Pancreas (tissue), 10 donors: ENCODE measurements at regions of chr3 and their contacts with region 1.

Region 1: DNA sequence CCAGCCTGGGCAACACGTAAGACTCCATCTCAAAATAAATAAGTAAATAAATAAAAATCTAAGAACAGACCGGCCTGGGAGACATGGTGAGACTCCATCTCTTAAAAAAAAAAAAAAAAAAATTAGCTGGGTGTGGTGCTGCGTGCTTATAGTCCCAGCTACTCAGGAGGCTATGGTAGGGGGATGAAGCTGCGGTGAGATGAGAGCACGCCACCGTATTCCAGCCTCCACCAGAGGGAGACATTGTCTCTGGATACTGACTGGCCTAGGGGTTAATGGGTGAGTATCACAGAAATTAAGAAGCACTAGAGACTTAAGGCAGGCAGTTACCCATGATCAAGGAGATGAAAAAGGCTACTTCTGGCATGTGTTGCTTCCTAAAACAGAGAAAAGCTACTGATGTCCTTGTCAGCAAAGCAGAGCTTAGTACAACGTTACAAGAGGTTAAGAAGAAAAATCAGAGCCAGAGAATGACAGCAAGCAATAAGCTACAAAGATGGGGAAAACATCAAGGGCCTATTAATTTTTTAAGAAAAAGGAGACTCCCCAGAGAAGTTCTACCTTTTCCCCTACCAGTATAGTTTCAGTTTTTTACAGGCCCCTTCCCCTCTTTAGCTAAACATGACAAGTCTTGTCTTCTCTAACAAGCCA is 8.6 kb downstream of the TFRC start:
- DNase-seq: peak in 4 of 6 donors; percentile 40 to 69 (median 50)
- ATAC-seq: peak; percentile 93 to 99 (median 96)
- H3K4me3 ChIP-seq: no peak overlapping the region
- H3K27ac ChIP-seq: no peak overlapping the region
- H3K4me1 ChIP-seq: no peaks in the 10 kb centered on the region
- H3K27me3 ChIP-seq: no peaks in the 10 kb centered on the region
- CTCF ChIP-seq: peak; percentile 29 to 71 (median 52)

Region 2: DNA sequence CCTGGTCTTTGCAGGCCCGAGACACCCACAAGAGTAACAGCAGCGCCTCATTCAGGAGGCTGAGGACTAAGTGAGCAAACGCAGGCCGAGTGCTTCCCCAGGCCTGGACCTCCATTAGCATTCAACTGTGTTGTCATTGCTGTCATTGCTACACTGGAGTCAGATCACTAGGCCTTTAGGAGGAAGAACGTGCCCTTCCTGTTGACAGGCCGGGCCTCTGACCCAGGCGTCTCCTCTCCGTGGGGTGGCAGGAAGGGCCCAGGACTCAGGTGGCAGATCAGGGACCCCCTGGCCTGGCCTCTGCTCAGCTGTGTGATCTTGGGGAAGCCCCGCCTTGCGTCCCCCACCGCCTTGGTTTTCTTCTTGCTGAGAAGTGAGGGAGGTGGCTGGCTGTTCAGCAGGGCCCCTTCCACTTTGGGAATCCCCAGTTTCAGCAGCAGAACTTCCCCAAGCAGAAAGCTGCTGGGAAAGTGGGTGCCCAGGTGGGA is 118.8 kb after region 1 on chr3:
- intact Hi-C with region 1: loop called (anchors 2 to 10 kb)
- DNase-seq: no peak
- ATAC-seq: peak in 2 of 4 donors; percentile 4 to 9
- H3K4me3 ChIP-seq: no peak overlapping the region
- H3K27ac ChIP-seq: peak overlapping the region in 3 of 4 donors; percentile 52 to 82 (median 74)
- H3K4me1 ChIP-seq: peaks cover 0 to 20% (median 12%) of the 10 kb centered on the region in 3 donors
- H3K27me3 ChIP-seq: no peaks in the 10 kb centered on the region
- CTCF ChIP-seq: no peak

Region 3: DNA sequence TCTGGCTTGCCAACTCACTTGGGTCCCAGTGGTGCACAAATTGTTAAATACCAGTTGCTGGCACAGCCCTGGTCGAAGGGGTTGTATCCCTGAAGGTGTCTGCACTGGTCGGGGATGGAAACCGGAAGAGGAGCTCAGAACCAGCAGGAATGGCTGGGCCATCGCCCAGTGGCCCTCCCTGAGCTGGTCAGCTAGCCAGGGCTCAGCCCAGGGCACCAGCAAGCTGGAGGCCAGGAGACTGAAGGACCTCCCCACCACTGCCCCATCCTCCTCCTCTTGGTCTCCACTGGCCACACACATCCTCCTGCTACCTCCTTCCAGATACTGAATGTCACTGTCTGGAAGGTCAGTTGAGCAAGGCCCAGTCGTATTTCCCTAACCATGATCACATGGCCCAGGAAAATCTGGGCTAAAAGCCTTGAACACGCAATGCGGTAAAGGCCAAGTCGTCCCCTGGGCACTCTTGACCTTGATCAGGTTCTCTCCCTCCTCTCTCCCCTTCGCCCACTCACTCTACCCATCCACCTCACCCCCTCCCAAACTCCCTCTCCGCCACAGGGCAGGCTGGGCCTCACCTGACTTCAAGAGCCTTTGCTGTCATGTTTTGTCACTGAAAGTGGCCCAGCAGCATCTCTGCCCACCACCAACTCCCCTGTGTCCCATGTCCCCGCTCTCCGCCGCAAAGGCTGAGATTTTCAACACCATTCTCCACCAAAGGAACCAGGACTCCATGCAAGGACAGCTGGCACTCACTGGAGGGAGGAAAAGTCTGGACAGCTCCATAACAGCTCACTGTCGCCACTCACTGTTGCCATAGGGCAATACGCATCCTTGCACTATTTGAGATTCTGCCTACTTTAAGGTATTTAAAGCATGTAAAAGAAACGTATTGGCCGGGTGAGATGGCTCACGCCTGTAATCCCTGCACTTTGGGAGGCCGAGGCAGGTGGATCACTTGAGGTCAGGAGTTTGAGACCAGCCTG is 125.7 kb after region 1 on chr3:
- intact Hi-C with region 1: loop called (anchors 2 to 10 kb)
- DNase-seq: no peak
- ATAC-seq: no peak
- H3K4me3 ChIP-seq: no peak overlapping the region
- H3K27ac ChIP-seq: no peak overlapping the region
- H3K4me1 ChIP-seq: peaks cover 0 to 6% (median under 1%) of the 10 kb centered on the region in 3 donors
- H3K27me3 ChIP-seq: no peaks in the 10 kb centered on the region
- CTCF ChIP-seq: no peak